SK-N-SH (cell line): ENCODE measurements at regions of chr12 and their contacts with region 1.

Region 1: DNA sequence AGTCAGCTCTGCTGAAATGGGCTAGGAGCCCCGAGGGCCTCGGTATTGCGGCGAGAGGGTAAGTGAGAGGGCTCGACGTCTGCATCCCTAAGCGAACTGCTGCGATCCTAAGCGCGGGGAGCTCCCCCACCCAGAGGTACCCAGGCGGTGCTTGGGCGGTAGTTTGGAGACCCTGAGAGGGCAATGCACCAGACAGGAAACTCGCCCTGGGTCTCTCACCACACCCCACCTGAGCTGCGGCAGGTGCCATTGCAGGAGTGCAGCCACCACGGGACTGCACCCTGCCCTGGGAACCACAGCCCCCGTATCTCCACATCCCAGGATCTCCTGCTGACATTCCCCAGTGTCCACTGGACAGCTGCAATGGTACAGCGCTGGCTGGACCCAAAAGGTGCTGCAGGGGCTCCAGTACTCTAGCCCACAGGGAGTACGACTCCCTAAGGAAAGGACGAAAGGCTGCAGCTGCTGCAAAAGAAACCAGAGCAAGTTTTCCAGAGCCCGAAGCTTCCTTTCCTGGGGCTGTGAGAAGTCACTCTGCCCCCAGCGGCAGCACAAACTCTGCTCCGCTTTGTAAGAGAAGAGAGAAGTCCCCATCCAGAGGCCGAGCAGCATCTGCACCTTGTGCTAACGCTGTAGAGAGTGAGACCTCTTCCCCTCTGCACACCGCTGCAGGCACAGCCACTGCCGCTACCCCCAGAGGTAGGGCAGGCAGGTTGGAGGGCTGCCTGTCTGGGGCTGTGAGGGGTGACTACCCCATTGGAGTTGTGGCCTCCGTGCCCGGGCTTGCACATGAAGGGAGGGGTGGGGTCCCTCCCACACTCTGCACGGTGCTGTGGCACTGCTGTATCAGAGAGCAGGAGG is 31.1 kb upstream of the MON2 start:
- DNase-seq: peak; percentile 61
- H3K4me3 ChIP-seq: peak overlapping the region; percentile 57 to 58
- H3K27ac ChIP-seq: no peak overlapping the region
- H3K4me1 ChIP-seq: peaks cover 0 to 14% of the 10 kb centered on the region in 2 experiments; a peak in 2 of 4 replicates
- H3K27me3 ChIP-seq: no peaks in the 10 kb centered on the region
- CTCF ChIP-seq: peak; percentile 63
- EP300 ChIP-seq: no peak
- RAD21 ChIP-seq: peak; percentile 42

Region 2: DNA sequence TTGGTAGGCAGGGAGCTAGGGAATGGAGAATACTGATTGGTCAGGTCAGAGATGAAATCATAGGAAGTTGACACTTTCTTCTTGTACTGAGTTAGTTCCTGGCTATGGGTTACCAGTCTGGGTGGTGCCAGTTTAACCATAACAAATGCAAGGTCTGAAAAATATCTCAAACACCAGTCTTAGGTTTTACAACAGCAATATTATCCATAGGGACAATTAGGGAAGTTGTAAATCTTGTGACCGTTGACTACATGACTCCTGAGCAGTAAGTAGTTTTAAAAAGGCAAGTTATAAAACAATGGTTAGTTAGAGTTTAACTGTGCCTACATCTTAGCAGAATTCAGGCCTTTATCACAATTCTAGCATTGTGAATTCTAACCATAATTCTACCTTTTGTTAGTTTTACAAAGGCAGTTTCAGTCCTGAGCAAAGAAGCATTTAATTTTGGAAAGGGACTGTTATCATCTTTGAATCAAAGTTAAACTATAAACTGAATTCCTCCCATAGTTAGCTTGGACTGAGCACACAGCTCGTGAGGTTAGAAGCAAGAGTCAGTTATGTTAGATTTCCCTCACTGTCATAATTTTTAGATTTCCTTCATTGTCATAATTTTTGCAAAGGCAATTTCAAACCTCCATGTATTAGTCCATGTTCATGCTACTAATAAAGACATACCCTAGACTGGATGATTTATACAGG is 11.4 kb after region 1 on chr12:
- CTCF ChIA-PET with region 1: interaction called, 20 read pairs
- POLR2A ChIA-PET with region 1: no interaction called
- DNase-seq: no peak
- H3K4me3 ChIP-seq: no peak overlapping the region
- H3K27ac ChIP-seq: no peak overlapping the region
- H3K4me1 ChIP-seq: no peaks in the 10 kb centered on the region
- H3K27me3 ChIP-seq: no peaks in the 10 kb centered on the region; the same call in 1 of the 2 replicates
- CTCF ChIP-seq: no peak
- EP300 ChIP-seq: no peak
- RAD21 ChIP-seq: no peak

Region 3: GRCh38 chr12:62500042-62500441 is 64.5 kb after region 1 on chr12:
- CTCF ChIA-PET with region 1: no interaction called
- POLR2A ChIA-PET with region 1: no interaction called
- DNase-seq: no peak
- H3K4me3 ChIP-seq: no peak overlapping the region
- H3K27ac ChIP-seq: no peak overlapping the region
- H3K4me1 ChIP-seq: no peaks in the 10 kb centered on the region
- H3K27me3 ChIP-seq: no peaks in the 10 kb centered on the region
- CTCF ChIP-seq: no peak
- EP300 ChIP-seq: no peak
- RAD21 ChIP-seq: no peak

Region 4: DNA sequence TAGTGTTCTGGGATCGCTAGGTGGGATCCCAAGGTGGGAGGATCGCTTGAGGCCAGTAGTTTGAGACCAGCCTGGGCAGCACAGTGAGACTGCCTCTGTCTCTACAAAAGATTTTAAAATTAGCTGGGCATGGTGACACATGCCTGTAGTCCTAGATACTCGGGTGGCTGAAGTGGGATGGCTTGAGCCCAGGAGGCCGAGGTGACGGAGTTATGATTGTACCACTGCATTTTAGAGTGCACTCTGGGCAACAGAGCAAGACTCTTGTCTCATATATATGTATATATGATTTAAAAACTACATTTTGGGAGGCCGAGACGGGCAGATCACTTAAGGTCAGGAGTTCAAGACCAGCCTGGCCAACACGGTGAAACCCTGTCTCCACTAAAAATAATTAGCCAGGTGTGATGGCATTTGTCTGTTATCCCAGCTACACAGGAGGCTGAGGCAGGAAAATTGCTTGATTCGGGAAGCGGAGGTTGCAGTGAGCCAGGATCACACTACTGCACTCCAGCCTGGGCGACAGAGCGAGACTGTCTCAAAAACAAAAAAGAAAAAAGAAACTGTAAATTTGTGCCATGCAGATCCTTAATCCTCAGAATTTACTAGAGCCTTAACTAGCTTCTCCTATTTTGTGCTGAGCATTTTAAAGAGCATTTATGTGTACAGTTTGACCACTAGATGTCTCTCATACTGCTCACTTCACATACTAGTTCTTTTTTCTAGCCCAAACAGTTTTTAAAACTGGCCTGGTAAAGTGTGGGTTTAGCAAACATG is 145.9 kb after region 1 on chr12:
- CTCF ChIA-PET with region 1: interaction called, 11 read pairs
- POLR2A ChIA-PET with region 1: no interaction called
- DNase-seq: peak; percentile 39
- H3K4me3 ChIP-seq: no peak overlapping the region; a peak in 1 of 4 replicates
- H3K27ac ChIP-seq: no peak overlapping the region
- H3K4me1 ChIP-seq: no peaks in the 10 kb centered on the region
- H3K27me3 ChIP-seq: no peaks in the 10 kb centered on the region
- CTCF ChIP-seq: peak; percentile 78
- EP300 ChIP-seq: no peak
- RAD21 ChIP-seq: peak; percentile 82

Region 5: DNA sequence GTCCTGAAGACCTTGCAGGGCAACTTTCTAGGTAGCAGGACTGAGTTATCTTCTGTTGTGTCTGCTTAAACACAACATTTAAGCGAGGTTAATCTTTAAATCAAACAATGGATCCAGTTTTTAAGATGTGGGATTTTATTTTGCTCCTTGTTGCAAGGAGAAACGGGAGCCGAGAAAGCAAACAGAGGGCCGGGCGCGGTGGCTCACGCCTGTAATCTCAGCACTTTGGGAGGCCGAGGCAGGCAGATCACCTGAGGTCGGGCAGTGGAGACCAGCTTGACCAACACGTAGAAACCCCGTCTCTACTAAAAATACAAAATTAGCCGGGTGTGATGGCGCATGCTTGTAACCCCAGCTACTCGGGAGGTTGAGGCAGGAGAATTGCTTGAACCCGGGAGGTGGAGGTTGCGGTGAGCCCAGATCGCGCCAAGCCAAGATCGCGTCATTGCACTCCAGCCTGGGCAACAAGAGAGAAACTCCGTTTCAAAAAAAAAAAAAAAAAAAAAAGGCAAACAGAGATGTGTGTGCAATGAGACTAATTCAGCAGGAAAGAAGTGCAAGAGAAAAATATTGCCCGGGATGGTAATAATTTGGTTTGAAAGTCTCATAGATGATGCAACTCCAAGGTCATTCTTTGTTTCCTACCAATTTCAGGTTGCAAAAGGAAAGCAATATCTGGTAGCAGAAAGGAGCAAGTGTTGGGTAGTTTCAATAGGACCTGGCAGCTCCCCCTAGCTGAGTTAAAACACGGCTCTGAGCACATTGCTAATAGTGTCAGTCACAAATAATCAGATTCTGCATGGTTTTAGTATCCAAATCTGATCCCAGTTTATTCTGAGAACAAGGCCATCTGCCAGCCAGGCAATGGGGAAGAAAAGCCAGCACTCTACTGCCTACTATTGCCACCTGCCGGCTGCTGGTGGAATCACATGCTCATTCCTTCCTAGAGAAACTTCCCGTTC is 358.0 kb after region 1 on chr12:
- CTCF ChIA-PET with region 1: interaction called, 189 read pairs
- POLR2A ChIA-PET with region 1: no interaction called
- DNase-seq: peak; percentile 81
- H3K4me3 ChIP-seq: peak overlapping the region in 1 of 2 experiments; percentile 22; a peak in 1 of 4 replicates
- H3K27ac ChIP-seq: peak overlapping the region; percentile 11 to 49; a peak in 3 of 4 replicates
- H3K4me1 ChIP-seq: peaks cover 2 to 11% of the 10 kb centered on the region in 2 experiments; a peak in 2 of 4 replicates
- H3K27me3 ChIP-seq: no peaks in the 10 kb centered on the region
- CTCF ChIP-seq: peak; percentile 96
- EP300 ChIP-seq: peak in 1 of 2 experiments; percentile 48; a peak in 1 of 4 replicates
- RAD21 ChIP-seq: peak; percentile 97

Region 6: DNA sequence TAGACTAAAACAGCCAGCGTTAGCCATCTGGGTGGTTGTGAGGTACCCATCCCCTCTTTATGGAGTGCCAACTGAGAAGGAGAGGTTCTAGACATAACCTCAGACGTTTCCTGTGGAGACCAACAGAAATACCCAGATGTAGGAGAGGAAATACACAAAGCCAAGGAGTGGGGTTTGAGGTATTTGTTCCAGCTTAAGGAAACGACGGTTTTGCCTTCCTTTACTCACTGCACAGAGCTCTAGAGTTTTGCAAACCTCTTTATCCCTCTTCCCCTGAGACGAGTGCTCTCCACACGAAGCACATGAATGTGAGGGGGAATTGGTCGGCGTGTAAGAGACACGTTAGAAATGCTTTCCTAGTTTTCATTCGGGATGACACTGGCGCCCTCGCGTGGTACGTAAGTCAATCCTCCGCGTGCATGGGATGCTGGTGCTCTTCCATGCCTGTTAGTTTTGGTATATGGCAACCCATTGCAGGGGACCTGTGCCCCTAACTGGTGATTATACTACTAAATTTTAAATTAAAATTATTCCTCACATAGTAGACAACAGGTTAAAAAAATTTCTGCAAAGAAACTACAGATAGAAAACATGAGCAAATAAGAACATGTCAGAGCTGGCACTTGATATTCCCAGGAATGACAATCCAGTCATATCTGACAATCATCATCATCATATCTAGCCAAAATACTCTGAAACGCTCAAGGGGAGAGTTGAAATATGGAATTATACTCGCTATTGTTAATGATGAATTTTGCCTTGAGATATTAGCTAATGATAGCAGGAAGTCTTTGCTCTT is 377.7 kb after region 1 on chr12:
- CTCF ChIA-PET with region 1: interaction called, 55 read pairs
- POLR2A ChIA-PET with region 1: no interaction called
- DNase-seq: peak; percentile 63
- H3K4me3 ChIP-seq: peak overlapping the region in 1 of 2 experiments; percentile 46; a peak in 2 of 4 replicates
- H3K27ac ChIP-seq: no peak overlapping the region
- H3K4me1 ChIP-seq: peaks cover 0 to 3% of the 10 kb centered on the region in 2 experiments; a peak in 2 of 4 replicates
- H3K27me3 ChIP-seq: peaks cover 9% of the 10 kb centered on the region; the same call in 1 of the 2 replicates
- CTCF ChIP-seq: peak; percentile 82
- EP300 ChIP-seq: no peak
- RAD21 ChIP-seq: peak; percentile 75